Naive thymus-derived CD4-positive, alpha-beta T cell (primary cell): ENCODE measurements at regions of chr5 and their contacts with region 1.

Region 1: GRCh38 chr5:98905857-98906690 is 22.7 kb downstream of the CHD1 start:
- DNase-seq: peak in 7 of 9 donors; percentile 32 to 73 (median 64)
- ATAC-seq: peak; percentile 87
- H3K4me3 ChIP-seq: no peak overlapping the region
- H3K4me3 Mint-ChIP-seq: peak overlapping the region in 2 of 10 donors; percentile 2 to 3
- H3K27ac ChIP-seq: peak overlapping the region; percentile 31
- H3K27ac Mint-ChIP-seq: peak overlapping the region in 8 of 9 donors; percentile 1 to 77 (median 34)
- H3K4me1 ChIP-seq: peaks cover 10 to 12% of the 10 kb centered on the region in 2 donors
- H3K4me1 Mint-ChIP-seq: peaks cover 29 to 68% (median 53%) of the 10 kb centered on the region in 7 donors
- H3K27me3 ChIP-seq: no peaks in the 10 kb centered on the region
- H3K27me3 Mint-ChIP-seq: no peaks in the 10 kb centered on the region

Region 2: DNA sequence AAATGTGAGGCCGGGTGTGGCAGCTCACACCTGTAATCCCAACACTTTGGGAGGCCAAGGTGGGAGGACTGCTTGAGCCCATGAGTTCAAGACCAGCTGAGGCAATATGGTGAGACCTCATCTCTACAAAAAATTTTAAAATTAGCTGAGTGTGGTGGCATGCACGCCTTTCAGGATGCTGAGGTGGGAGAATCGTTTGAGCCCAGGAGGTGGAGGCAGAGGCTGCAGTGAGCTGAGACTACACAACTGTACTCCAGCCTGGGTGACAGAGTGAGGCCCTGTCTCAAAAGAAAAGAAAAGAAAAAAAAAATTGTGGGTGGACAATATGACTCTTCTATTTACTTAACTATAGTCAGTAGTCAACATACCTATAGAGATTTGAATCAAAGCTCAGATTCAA is 17.9 kb after region 1 on chr5:
- CTCF ChIA-PET with region 1: no interaction called
- POLR2A ChIA-PET with region 1: interaction called, 19 read pairs
- intact Hi-C with region 1: loop called (anchors 1 kb)
- DNase-seq: no peak
- ATAC-seq: no peak
- H3K4me3 ChIP-seq: no peak overlapping the region
- H3K4me3 Mint-ChIP-seq: peak overlapping the region in 7 of 10 donors; percentile 16 to 67 (median 27)
- H3K27ac ChIP-seq: no peak overlapping the region
- H3K27ac Mint-ChIP-seq: peak overlapping the region in 3 of 9 donors; percentile 59 to 67 (median 64)
- H3K4me1 ChIP-seq: peaks cover 16 to 28% of the 10 kb centered on the region in 2 donors
- H3K4me1 Mint-ChIP-seq: peaks cover 38 to 89% (median 79%) of the 10 kb centered on the region in 7 donors
- H3K27me3 ChIP-seq: no peaks in the 10 kb centered on the region
- H3K27me3 Mint-ChIP-seq: peaks cover 0 to 2% (median 0%) of the 10 kb centered on the region in 5 donors

Region 3: DNA sequence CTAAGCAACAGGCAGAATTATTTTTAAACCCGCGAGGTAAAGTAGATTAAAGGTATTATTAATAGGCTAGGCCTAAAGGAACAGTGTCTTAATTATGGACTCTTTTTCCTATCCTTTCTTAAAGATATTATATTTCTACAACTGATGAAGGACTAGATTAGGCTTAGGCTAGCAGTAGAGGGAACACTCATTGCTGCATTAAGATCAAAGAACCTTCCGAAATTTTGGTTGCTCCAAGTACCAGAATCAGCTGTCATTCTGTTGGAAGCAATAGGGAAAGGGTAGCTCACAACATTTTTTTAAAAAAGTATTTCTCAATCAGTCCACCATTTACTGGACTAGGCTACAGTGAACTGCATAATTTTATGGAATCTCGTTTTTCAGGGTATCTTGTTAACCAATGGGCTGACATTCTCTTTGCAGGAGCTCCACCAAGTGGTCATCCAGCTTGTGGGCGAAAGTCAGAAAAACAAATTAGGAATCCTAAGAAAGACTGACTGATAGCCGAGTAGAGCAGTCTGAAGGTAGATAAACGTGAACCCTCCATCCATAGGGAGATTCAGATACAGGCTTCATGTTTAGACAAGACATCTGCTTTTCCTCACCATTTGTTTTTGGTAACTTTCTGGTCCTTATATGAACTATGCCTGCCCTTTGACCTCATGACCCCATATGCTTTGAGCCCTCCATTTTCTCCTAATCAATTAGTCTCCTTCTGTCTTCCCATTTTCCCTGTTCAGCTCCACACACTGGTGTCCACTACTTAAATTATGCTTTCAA is 126.3 kb after region 1 on chr5:
- CTCF ChIA-PET with region 1: interaction called, 7 read pairs
- POLR2A ChIA-PET with region 1: interaction called, 9 read pairs
- intact Hi-C with region 1: loop called (anchors 1 kb)
- DNase-seq: peak in 3 of 9 donors; percentile 22 to 43 (median 38)
- ATAC-seq: peak; percentile 49
- H3K4me3 ChIP-seq: peak overlapping the region; percentile 43
- H3K4me3 Mint-ChIP-seq: peak overlapping the region; percentile 71 to 97 (median 88)
- H3K27ac ChIP-seq: peak overlapping the region; percentile 70
- H3K27ac Mint-ChIP-seq: peak overlapping the region; percentile 85 to 98 (median 96)
- H3K4me1 ChIP-seq: peaks cover 30 to 31% of the 10 kb centered on the region in 2 donors
- H3K4me1 Mint-ChIP-seq: peaks cover 32 to 87% (median 79%) of the 10 kb centered on the region in 7 donors
- H3K27me3 ChIP-seq: no peaks in the 10 kb centered on the region
- H3K27me3 Mint-ChIP-seq: no peaks in the 10 kb centered on the region